ENCODE measurements at regions of chr1 and their contacts with region 1.

Region 1: DNA sequence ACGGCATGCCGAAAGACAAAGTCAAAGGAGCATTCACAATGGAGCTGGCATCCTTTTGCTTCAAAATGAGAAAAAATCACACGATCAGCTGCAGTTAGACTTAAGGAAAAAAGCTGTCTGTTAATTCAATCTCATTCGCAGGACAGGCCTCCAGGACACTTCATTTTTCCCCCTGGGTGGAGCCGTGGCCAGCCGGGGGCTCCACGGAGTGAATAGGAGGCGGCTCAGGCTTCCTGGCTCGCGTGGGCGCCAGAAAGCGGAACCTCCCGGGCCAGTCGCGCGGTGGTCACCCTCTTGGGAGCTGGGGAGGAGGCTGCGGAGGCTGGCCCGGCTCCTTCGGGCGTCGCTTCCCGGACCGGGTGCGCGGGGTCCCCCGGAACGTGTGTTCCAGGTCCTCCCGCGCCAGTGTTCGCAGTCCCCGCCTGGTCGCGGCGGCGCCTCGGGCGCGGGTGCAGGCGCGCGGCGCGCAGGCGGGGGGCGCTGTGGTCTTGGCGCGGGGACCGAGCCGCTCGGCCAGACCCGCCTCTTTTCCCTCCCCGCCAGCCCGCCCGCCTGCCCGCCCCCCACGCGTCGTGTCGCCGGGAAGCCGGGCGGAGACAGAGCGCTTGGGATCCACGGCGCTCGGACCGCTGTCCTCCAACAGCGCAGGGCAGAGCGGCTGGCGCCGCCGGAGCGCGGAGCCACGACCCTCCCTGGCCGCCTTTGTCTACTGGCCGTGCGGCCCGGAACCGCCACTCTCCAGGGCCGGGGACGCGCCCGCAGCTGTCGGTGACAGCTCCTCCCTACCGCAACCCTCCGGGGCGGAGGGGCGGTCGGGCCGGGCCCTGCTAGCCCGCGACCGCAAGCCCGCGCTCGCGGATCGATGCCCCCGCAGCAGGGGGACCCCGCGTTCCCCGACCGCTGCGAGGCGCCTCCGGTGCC is at the start of gene RHOU:
- DNase-seq: peak; percentile 65
- H3K4me3 Mint-ChIP-seq: peak within 1 kb of the TSS; percentile 84
- H3K27ac Mint-ChIP-seq: no peak within 1 kb of the TSS
- H3K4me1 Mint-ChIP-seq: peaks cover 27% of the 10 kb centered on the region
- H3K27me3 Mint-ChIP-seq: peaks cover 40% of the 10 kb centered on the region
- total RNA-seq, gene RHOU: 0.49 and 0.69 TPM in 2 replicates

Region 2: GRCh38 chr1:228794173-228794572 is 59.0 kb after region 1 on chr1:
- intact Hi-C with region 1: loop called (anchors 1 kb)
- DNase-seq: peak; percentile 49
- H3K4me3 Mint-ChIP-seq: no peak overlapping the region
- H3K27ac Mint-ChIP-seq: no peak overlapping the region
- H3K4me1 Mint-ChIP-seq: peaks cover 27% of the 10 kb centered on the region
- H3K27me3 Mint-ChIP-seq: no peaks in the 10 kb centered on the region

Region 3: GRCh38 chr1:228830954-228831481 is 95.9 kb after region 1 on chr1:
- intact Hi-C with region 1: loop called (anchors 5 kb)
- DNase-seq: peak; percentile 16
- H3K4me3 Mint-ChIP-seq: no peak overlapping the region
- H3K27ac Mint-ChIP-seq: no peak overlapping the region
- H3K4me1 Mint-ChIP-seq: peaks cover 55% of the 10 kb centered on the region
- H3K27me3 Mint-ChIP-seq: peaks cover 13% of the 10 kb centered on the region

Region 4: GRCh38 chr1:228927946-228928898 is 193.1 kb after region 1 on chr1:
- intact Hi-C with region 1: loop called (anchors 5 kb)
- DNase-seq: peak; percentile 12
- H3K4me3 Mint-ChIP-seq: no peak overlapping the region
- H3K27ac Mint-ChIP-seq: peak overlapping the region; percentile 41
- H3K4me1 Mint-ChIP-seq: peaks cover 15% of the 10 kb centered on the region
- H3K27me3 Mint-ChIP-seq: peaks cover 26% of the 10 kb centered on the region